Ovary (tissue), 10 donors: ENCODE measurements at regions of chr19 and their contacts with region 1.

Region 1: GRCh38 chr19:42254989-42255765 is at the start of gene ERF:
- DNase-seq: peak; percentile 93 to 98 (median 96)
- H3K4me3 ChIP-seq: peak within 1 kb of the TSS; percentile 73
- H3K27ac ChIP-seq: peak within 1 kb of the TSS; percentile 97 to 99
- H3K4me1 ChIP-seq: peaks cover 18% of the 10 kb centered on the region
- H3K27me3 ChIP-seq: no peaks in the 10 kb centered on the region
- CTCF ChIP-seq: peak in 2 of 3 donors; percentile 20 to 27
- EP300 ChIP-seq: peak; percentile 53
- POLR2A ChIP-seq: peak; percentile 99
- total RNA-seq, gene ERF: 23.1 to 110 (median 76.6) TPM

Region 2: GRCh38 chr19:42268704-42269477 is 13.7 kb after region 1 on chr19 and contains the start of gene CIC:
- intact Hi-C with region 1: loop called in 1 of 4 experiments (anchors 2 kb)
- DNase-seq: peak; percentile 99 to 100 (median 100)
- H3K4me3 ChIP-seq: peak within 1 kb of the TSS; percentile 89
- H3K27ac ChIP-seq: peak within 1 kb of the TSS; percentile 94 to 100
- H3K4me1 ChIP-seq: peaks cover 6% of the 10 kb centered on the region
- H3K27me3 ChIP-seq: no peaks in the 10 kb centered on the region
- CTCF ChIP-seq: no peak
- EP300 ChIP-seq: no peak
- POLR2A ChIP-seq: no peak
- total RNA-seq, gene CIC: 24.6 to 139 (median 113) TPM

Region 3: DNA sequence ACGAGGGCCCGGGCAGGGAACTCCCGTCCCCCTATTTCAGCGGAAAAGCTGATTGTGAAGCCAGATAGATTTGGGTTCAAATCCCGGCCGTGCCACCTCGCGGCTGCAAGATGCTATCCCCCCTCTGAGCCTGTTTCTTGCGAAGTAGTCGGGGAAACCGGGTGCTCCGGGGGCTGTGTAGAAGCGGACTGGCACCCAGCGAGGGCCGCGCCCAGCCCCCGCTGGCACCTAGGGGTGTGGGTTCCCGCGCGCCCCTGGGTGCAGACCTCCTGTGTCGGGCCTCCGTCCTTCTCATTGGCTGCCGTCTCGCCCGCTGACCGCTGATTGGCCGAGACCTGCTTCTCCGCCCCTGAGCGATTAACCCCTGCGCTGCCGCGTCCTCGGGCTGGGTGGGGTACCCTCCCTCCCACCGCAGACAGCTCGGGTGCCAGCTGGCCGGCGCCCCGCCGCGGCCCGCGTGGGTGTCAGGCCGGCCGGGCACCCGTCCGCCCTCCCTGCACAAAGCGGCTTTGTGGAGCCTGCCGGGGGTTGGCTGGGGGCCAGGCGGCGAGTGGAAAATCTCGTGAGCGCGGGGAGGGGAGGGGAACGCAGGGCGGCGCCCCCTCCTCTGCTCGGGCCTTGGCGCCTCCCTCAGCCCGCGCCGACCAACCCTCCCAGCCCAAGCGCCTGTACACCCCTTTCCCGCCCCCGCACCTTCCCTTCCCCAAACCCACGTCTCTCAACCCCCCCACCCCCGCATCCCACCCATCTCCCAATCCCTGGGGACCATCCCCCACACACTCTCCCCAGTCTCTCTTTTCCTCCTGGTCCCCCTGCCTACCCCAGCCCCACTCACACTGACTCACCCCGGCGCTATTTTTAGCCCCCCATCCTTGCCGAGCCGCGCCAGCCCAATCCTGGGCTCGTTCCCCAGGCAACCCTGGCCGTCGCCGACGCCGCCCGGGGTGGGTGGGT is 25.3 kb after region 1 on chr19:
- intact Hi-C with region 1: loop called in 1 of 4 experiments (anchors 2 kb)
- DNase-seq: peak; percentile 95 to 97 (median 96)
- H3K4me3 ChIP-seq: peak overlapping the region; percentile 91
- H3K27ac ChIP-seq: peak overlapping the region; percentile 83 to 98
- H3K4me1 ChIP-seq: peaks cover 24% of the 10 kb centered on the region
- H3K27me3 ChIP-seq: no peaks in the 10 kb centered on the region
- CTCF ChIP-seq: no peak
- EP300 ChIP-seq: no peak
- POLR2A ChIP-seq: peak; percentile 55